Activated CD4-positive, alpha-beta T cell treated with anti-CD3 and anti-CD28 coated beads, Interleukin-2, amount 10 ng/mL, durations not matched to agents 24 days and 14 days (primary cell): ENCODE measurements at regions of chr22 and their contacts with region 1.

Region 1: GRCh38 chr22:35430897-35431322 is 31.0 kb downstream of the MCM5 start:
- DNase-seq: peak; percentile 90
- H3K4me3 Mint-ChIP-seq: no peak overlapping the region
- H3K27ac Mint-ChIP-seq: no peak overlapping the region
- H3K4me1 Mint-ChIP-seq: no peaks in the 10 kb centered on the region
- H3K27me3 Mint-ChIP-seq: no peaks in the 10 kb centered on the region

Region 2: GRCh38 chr22:35582861-35583670 is 152.2 kb after region 1 on chr22:
- intact Hi-C with region 1: loop called (anchors 5 kb)
- DNase-seq: peak; percentile 84
- H3K4me3 Mint-ChIP-seq: no peak overlapping the region
- H3K27ac Mint-ChIP-seq: no peak overlapping the region
- H3K4me1 Mint-ChIP-seq: peaks cover 3% of the 10 kb centered on the region
- H3K27me3 Mint-ChIP-seq: peaks cover 3% of the 10 kb centered on the region

Region 3: GRCh38 chr22:35622191-35622913 is 191.4 kb after region 1 on chr22:
- intact Hi-C with region 1: loop called (anchors 5 kb)
- DNase-seq: no peak
- H3K4me3 Mint-ChIP-seq: no peak overlapping the region
- H3K27ac Mint-ChIP-seq: no peak overlapping the region
- H3K4me1 Mint-ChIP-seq: peaks cover 6% of the 10 kb centered on the region
- H3K27me3 Mint-ChIP-seq: peaks cover 4% of the 10 kb centered on the region